ENCODE measurements at regions of chr6 and their contacts with region 1.

Region 1: DNA sequence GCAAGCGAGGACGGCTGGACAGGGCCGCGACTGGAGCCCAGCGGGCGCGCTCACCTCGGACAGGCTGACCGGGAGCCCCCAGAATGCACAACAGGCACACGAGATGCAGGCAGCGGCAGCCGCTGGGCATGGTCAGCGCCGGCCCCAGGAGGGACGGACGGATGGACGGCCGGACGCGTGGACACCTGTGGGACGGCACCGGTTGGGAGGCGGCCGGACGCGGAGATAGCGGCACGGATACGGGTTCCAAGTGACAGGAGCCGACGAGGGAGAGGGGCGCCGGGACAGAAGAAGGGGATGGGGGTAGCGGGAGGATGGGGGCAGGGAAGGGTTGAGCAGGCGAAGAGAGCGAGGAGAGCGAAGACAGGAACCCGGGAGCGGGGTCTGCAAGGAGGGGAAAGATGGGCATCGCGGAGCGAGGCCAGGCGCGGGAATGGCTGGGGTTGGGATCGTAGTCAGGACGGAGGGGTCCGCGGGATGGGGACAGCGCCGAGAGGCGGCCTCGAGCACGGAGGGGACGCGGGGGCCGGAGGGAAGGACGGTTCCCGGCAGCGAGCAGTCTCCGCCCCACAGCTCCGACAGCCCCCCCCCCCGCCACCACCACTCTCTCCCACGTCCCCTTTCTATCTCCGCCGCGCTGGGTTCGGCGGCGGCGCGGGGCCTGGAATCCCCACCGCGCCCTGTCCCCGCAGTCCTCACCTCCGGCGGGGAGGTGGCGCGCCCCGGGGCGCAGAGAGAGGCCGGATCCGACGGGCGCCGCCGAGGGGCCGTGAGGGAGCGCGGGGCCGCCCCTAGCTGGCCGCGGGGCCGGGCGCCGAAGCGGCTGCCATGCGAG is 435 bp downstream of the DLK2 start:
- H3K4me3 ChIP-seq: peak overlapping the region; percentile 65
- H3K27ac ChIP-seq: no peak overlapping the region; the same call in 1 of the 2 replicates
- H3K4me1 ChIP-seq: no peaks in the 10 kb centered on the region
- CTCF ChIP-seq: peak; percentile 97

Region 2: DNA sequence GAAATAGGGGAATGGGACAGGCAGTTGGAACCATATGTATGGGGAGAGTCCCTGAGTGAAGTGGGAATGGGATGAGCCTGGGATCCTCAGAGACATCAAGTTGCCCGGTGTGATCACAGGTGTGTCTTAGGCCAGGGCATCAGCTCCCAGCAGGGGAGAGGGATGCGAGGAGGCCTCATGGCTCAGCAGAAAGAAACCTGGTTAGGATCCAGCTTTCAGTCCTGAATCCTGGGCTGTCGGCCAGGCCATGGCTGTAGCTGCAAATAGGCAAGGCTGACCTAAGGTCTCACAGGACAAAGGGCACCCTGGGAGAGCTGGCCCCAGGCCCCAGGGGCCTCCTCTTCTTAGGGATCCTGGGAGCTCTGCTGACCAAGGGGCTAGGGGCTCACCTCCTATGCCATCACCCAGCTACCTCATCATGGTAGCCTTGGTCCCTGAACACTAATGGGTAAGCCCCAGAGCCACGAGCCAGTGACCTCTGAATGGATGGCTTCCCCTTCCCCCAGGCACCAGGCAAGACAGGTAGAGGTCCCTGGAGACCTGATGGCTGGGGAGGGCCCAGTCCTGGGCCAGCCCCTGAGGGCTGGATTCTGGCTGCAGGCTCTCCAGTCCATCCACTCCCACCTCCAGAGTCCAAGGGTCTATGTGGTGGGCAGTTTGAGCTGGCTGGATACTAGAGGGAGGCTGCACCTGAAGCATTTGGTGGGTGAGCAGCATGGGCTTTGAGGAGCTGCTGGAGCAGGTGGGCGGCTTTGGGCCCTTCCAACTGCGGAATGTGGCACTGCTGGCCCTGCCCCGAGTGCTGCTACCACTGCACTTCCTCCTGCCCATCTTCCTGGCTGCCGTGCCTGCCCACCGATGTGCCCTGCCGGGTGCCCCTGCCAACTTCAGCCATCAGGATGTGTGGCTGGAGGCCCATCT is 157.0 kb before region 1 on chr6 and contains the start of gene SLC22A7:
- CTCF ChIA-PET with region 1: no interaction called
- POLR2A ChIA-PET with region 1: no interaction called
- H3K4me3 ChIP-seq: no peak within 1 kb of the TSS
- H3K27ac ChIP-seq: no peak within 1 kb of the TSS
- H3K4me1 ChIP-seq: no peaks in the 10 kb centered on the region
- CTCF ChIP-seq: no peak

Region 3: GRCh38 chr6:43444036-43444435 is 10.9 kb before region 1 on chr6:
- CTCF ChIA-PET with region 1: interaction called, 5 read pairs
- POLR2A ChIA-PET with region 1: interaction called, 12 read pairs
- H3K4me3 ChIP-seq: no peak overlapping the region
- H3K27ac ChIP-seq: no peak overlapping the region
- H3K4me1 ChIP-seq: no peaks in the 10 kb centered on the region
- CTCF ChIP-seq: no peak

Region 4: GRCh38 chr6:43465948-43466347 is 11.0 kb after region 1 on chr6:
- CTCF ChIA-PET with region 1: interaction called, 5 read pairs
- POLR2A ChIA-PET with region 1: interaction called, 10 read pairs
- H3K4me3 ChIP-seq: no peak overlapping the region
- H3K27ac ChIP-seq: no peak overlapping the region
- H3K4me1 ChIP-seq: peaks cover 5% of the 10 kb centered on the region; the same call in 1 of the 2 replicates
- CTCF ChIP-seq: no peak

Region 5: GRCh38 chr6:43496370-43497128 is 41.6 kb after region 1 on chr6:
- CTCF ChIA-PET with region 1: interaction called, 52 read pairs
- POLR2A ChIA-PET with region 1: interaction called, 3 read pairs
- H3K4me3 ChIP-seq: no peak overlapping the region
- H3K27ac ChIP-seq: no peak overlapping the region
- H3K4me1 ChIP-seq: peaks cover 7% of the 10 kb centered on the region
- CTCF ChIP-seq: 0 out of 2 replicates have a peak, but pooled peaks have one; percentile 22

Measured in HEK293 (cell line).